ENCODE measurements at regions of chr19 and their contacts with region 1.

Region 1: GRCh38 chr19:37594304-37594981 is at the starts of genes ZNF540 and ZNF571:
- DNase-seq: peak; percentile 96
- H3K4me3 Mint-ChIP-seq: peak within 1 kb of the TSS; percentile 98
- H3K27ac Mint-ChIP-seq: peak within 1 kb of the TSS; percentile 97
- H3K4me1 Mint-ChIP-seq: peaks cover 21% of the 10 kb centered on the region
- H3K27me3 Mint-ChIP-seq: no peaks in the 10 kb centered on the region
- total RNA-seq, gene ZNF540: 0.38 and 0.49 TPM in 2 replicates
- total RNA-seq, gene ZNF571: 0.47 and 1.1 TPM in 2 replicates

Region 2: DNA sequence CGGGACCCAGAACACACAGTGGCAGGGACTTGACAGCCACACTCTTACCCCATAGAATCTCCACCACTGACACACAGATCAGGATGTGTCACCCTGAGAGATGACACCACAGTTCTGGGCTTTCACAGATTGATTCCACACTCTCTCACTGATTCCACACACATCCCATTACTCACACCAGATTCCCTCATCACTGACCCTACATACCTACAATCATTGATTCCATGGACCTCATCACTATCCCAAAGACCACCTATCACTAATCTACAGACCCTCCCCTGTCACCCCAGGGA is 281.2 kb before region 1 on chr19:
- intact Hi-C with region 1: loop called (anchors 1 kb)
- DNase-seq: no peak
- H3K4me3 Mint-ChIP-seq: peak overlapping the region; percentile 71
- H3K27ac Mint-ChIP-seq: no peak overlapping the region
- H3K4me1 Mint-ChIP-seq: peaks cover 12% of the 10 kb centered on the region
- H3K27me3 Mint-ChIP-seq: no peaks in the 10 kb centered on the region

Region 3: GRCh38 chr19:37655689-37656371 is 61.4 kb after region 1 on chr19:
- intact Hi-C with region 1: loop called (anchors 1 kb)
- DNase-seq: peak; percentile 96
- H3K4me3 Mint-ChIP-seq: peak overlapping the region; percentile 99
- H3K27ac Mint-ChIP-seq: peak overlapping the region; percentile 98
- H3K4me1 Mint-ChIP-seq: peaks cover 28% of the 10 kb centered on the region
- H3K27me3 Mint-ChIP-seq: no peaks in the 10 kb centered on the region

Region 4: GRCh38 chr19:37691881-37692504 is 97.5 kb after region 1 on chr19:
- intact Hi-C with region 1: loop called (anchors 1 kb)
- DNase-seq: peak; percentile 87
- H3K4me3 Mint-ChIP-seq: peak overlapping the region; percentile 87
- H3K27ac Mint-ChIP-seq: peak overlapping the region; percentile 85
- H3K4me1 Mint-ChIP-seq: peaks cover 4% of the 10 kb centered on the region
- H3K27me3 Mint-ChIP-seq: no peaks in the 10 kb centered on the region

Region 5: DNA sequence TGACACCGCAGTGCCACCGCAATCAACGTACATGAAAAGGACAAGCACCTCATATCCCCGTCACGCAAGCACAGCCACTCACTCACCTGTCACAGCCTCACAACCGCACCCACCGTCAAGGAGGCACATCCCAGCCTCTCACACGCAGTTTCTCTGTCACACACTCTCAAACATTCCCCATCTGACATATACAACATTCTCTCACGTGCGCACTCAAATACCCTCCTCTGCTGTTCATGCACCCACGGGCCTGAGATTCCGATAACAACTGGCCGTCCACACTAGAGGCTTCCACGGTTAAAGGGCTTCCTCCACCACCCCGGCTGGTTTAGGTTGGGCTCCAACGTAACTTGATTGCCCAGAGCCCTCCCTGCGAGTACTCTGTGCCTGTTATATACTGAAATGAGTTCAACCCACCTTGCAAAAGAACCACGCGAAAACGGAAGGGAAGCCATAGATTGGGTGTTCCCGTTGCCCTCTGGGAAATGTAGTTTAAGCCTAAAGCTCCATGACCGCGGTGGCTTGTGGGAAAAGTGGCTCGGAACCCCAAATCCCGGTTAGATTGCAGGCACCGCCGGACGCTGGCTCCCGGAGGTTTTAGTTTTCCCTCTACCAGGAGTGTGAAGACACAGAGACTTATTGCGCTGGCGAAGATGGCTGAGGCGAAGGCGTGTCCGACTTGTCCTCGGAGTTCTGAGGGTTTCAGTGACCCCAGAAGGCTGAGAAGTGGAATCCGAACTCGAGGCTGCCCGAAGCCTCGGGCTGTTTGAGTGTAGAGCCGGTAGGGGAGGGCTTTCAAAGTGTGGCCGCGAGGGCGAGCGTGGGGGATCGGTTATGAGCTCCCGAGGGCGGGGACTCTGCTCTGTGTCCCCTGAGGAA is 184.9 kb after region 1 on chr19 and contains the start of gene ZNF573:
- intact Hi-C with region 1: loop called (anchors 2 kb)
- DNase-seq: peak; percentile 93
- H3K4me3 Mint-ChIP-seq: peak within 1 kb of the TSS; percentile 96
- H3K27ac Mint-ChIP-seq: peak within 1 kb of the TSS; percentile 92
- H3K4me1 Mint-ChIP-seq: peaks cover 11% of the 10 kb centered on the region
- H3K27me3 Mint-ChIP-seq: no peaks in the 10 kb centered on the region
- total RNA-seq, gene ZNF573: 6.5 and 6.8 TPM in 2 replicates